Cardiac septum (tissue), 1 donor: ENCODE measurements at regions of chr15 and their contacts with region 1.

Region 1: DNA sequence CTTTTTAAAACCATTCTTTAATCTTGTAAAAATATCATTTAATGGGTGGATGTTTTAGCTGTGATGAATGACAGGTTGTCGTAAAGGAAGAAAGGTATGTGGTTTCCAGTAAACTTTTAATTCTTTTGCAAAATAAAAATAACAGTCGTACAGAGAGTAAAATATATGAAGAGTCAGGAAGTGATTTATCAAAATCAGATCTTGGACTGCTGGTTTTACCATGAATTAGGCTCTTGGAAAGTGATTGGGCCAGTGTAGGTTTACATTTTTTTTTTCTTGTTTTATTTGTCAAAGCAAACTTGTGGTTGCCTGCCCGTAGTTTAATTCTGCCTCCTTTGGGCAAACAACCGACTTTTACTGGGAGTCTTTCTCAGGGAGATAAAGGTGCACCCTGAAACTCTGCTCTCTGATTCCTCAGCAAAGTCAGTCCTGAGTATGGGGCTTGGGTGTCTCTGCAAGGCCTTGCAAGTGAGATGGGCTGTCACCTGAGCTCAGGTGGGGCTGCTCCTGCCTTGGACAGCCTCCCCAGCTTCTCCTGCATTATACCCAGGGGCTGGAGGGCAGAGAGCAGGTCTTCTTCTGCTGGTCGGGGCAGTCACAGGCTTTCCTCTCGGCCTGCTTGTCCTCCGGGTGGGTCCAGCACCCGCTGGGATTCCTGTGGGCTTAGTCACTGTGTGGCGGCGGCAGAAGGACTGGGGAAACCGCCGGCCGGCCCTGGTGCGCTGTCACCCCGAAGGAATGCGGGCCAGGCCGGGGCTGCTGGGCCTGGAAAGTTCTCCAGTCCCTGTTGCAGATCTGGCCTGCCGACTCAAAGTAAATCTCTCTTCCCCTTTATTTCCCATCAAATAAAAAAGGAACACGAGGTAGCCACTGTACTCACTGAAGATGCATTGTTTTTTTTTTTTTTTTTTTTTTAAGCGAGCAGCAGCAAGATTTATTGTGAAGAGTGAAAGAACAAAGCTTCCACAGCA is 79.1 kb downstream of the IGF1R start:
- DNase-seq: peak; percentile 95

Region 2: GRCh38 chr15:98671060-98672008 is 56.1 kb before region 1 on chr15:
- intact Hi-C with region 1: loop called (anchors 10 kb)
- DNase-seq: no peak

Region 3: GRCh38 chr15:98689431-98689861 is 38.0 kb before region 1 on chr15:
- intact Hi-C with region 1: no loop called
- DNase-seq: no peak

Region 4: DNA sequence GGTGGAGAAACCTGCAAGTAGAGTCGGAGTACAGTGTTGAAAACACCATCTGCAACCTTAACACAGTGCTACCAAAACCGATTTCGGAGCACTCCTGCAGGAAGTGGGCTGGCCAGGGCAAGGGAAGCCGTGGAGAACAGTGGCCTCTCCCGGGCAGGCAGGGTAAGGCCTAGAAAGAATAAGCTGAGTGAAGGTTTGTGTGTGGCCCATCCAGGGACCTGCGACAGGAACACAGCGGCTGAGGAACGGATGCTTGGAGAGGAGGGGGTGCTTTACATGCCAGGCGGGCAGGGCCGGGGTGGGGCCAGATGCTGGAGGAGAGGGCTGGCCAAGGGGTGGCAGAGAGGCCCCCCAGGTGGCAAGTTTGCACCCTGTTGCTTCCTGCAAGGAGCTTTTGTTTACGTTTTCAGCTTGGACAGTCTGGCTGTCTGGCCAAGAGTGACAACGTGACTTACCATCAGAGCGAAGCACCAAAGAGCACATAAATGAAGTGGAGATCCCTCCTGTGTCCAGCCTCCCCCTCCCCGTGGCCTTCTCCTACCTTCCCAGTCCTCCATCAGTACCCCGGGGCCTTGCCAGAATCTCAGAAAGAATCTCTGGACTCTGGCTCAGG is 123.7 kb after region 1 on chr15:
- intact Hi-C with region 1: no loop called
- DNase-seq: peak; percentile 92

Region 5: DNA sequence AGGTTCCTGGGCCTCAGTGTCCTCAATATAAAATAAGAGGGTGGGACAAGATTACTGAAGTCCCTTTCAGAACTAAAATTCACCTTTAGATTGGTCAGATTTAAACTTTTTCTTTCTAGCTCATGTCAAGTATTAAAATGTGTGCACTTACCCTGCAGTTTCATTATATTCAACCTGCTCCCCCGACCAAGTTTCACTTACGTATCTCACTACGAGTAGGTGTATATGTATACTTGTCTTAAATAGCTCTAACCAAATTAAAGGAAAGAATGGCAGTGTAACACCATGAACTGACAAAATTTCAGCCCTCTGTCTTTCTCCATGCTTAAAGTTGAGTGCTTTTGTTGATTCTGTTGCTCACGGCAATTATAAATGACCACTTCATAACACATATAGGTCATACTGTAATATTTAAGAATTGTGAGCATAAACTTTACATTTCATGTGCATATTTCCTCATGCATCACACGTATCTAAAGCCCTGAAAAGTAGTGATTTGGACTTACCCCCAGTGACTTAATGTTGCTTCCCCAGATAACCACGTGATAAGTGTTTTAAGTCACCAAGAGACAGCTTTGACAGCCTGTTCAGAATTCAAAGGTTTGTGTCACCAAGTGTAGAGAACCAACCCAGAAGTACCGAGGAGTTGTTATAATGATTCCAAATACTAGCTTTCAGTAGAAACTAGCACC is 210.2 kb after region 1 on chr15:
- intact Hi-C with region 1: no loop called
- DNase-seq: no peak